HepG2 (cell line): ENCODE measurements at regions of chr11 and their contacts with region 1.

Region 1: GRCh38 chr11:46889689-46890475 is 28.5 kb downstream of the LRP4 start:
- DNase-seq: peak; percentile 65
- ATAC-seq: peak; percentile 88
- H3K4me3 ChIP-seq: no peak overlapping the region
- H3K27ac ChIP-seq: no peak overlapping the region
- H3K4me1 ChIP-seq: no peaks in the 10 kb centered on the region
- H3K27me3 ChIP-seq: no peaks in the 10 kb centered on the region
- CTCF ChIP-seq: peak; percentile 86
- EP300 ChIP-seq: no peak
- POLR2A ChIP-seq: no peak
- RAD21 ChIP-seq: peak; percentile 81

Region 2: DNA sequence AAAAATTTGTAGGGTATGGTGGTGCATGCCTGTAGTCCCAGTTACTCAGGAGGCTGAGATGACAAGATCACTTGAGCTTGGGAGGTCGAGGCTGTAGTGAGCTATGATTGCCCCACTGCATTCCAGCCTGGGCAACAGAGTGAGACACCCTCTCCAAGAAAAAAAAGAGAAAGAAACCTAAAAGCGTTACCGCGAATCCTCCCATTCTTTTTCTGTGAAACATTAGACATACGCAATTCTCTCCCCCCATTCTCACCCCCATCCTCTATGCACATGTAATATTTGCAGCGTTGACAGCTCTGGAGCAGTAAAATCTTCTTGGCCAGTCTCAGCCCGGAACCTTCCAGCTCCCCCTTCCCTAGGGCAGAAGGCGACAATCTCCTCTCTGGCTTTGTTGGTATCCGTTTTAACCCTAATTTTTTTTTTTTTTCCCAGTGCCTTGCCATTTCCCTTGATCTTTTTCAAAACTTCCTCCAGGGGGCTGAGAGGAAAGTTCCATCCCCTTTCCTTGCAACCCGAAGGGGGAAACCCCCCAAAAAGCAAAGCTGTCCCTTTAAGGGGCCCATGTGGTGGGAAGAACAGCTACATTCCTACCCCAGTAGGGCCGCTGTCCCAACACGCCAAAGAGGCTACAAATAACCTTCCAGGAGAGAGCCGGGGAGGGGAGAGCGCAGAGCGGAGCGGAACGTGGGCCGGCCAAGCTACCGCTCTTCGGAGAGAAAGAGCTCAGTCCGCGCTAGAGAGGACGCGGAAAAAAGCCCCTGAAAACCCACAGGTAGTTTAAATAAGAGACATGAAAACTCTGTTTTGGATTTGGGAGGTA is 26.6 kb after region 1 on chr11:
- CTCF ChIA-PET with region 1: interaction called, 6 read pairs
- POLR2A ChIA-PET with region 1: no interaction called
- in situ Hi-C with region 1: no loop called
- intact Hi-C with region 1: loop called (anchors 2 kb)
- DNase-seq: peak; percentile 55
- ATAC-seq: peak; percentile 76
- H3K4me3 ChIP-seq: peak overlapping the region; percentile 68 to 91 (median 75)
- H3K27ac ChIP-seq: peak overlapping the region; percentile 71
- H3K4me1 ChIP-seq: peaks cover 35% of the 10 kb centered on the region
- H3K27me3 ChIP-seq: peaks cover 2 to 5% of the 10 kb centered on the region in 2 experiments; a peak in 1 of 5 replicates
- CTCF ChIP-seq: 0 out of 2 replicates have a peak, but pooled peaks have one; percentile 19
- EP300 ChIP-seq: no peak
- POLR2A ChIP-seq: no peak
- RAD21 ChIP-seq: no peak

Region 3: DNA sequence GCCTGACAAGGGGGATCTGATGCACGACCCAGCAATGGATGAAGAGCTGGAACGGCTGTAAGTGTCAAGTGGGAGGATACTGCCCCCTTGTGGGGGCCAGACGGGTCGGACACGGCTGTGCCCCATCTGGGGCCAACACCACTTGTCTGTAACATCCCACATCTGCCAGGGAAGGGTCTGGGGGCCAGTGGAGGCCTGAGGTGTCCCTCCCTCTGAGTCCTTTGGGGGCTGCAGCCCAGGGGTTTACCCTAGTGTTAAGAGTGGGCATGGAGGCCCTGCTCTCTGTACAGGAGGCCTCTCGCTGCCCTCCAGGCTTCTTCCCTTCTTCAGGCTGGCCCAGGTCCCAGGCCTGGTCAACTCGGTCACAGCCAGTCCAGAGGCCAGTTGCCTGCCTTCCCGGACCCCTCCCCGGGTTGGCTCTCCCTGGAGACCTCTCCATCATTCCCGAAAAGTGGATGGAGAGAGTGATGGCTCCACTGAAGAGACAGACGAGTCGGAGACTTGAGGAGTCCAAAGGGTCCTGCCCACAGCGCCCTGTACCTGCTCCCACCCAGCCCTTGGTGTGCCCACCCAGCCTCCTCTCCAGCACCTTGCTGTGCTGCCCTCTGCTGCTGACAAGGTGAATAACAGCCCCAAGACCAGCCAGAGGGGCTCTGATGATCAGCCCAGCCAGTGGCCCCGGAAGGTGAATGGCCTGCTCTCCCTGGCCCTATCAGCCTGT is 271.4 kb after region 1 on chr11:
- CTCF ChIA-PET with region 1: interaction called, 52 read pairs
- POLR2A ChIA-PET with region 1: no interaction called
- in situ Hi-C with region 1: loop called (anchors 5 kb)
- intact Hi-C with region 1: loop called (anchors 1 kb)
- DNase-seq: peak; percentile 63
- ATAC-seq: peak; percentile 81
- H3K4me3 ChIP-seq: no peak overlapping the region
- H3K27ac ChIP-seq: no peak overlapping the region
- H3K4me1 ChIP-seq: peaks cover 21% of the 10 kb centered on the region
- H3K27me3 ChIP-seq: no peaks in the 10 kb centered on the region
- CTCF ChIP-seq: peak; percentile 81
- EP300 ChIP-seq: no peak
- POLR2A ChIP-seq: peak in 1 of 2 experiments; percentile 47; a peak in 2 of 4 replicates
- RAD21 ChIP-seq: peak; percentile 72